ENCODE measurements at regions of chr5 and their contacts with region 1.

Region 1: DNA sequence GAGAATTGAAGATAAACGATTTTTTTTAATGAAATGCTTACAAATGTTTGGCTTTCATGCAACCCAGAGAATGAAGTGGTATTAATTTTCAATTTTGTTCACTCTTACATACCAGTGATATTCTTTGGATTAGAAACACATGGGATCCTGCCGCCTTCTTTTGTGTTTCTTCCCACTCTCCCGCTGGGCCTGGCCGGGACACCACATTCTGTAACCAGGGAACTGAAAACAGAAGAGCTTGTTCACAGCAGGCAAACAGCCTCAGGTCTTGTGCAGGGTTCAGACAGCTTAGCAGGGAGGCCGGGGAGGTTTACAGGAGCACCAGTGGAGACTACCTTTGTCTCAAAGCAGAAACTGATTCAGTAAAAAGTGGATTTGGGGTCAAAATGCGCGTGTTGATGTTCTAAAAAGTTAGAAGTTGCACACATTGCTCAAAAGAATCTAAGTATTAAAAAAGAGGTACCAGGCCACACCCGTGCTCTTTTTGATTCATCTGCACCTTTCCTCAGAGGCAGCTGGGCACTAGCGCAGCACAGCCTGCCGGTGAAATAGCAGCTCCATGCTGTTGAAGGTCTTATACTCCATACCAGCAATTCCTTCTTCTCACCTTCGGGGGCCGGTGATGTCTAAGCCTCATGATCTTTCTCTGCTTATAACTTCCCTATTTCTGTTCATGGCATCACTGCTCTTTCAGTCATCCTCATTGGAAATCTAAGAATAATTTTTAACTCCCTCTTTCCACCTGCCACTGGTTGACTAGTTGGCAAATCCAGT is 67.1 kb downstream of the GRAMD2B start:
- DNase-seq: no peak
- ATAC-seq: no peak
- H3K4me3 ChIP-seq: no peak overlapping the region
- H3K4me3 Mint-ChIP-seq: no peak overlapping the region
- H3K27ac ChIP-seq: no peak overlapping the region
- H3K27ac Mint-ChIP-seq: peak overlapping the region in 7 of 9 donors; percentile 2 to 91 (median 38)
- H3K4me1 ChIP-seq: no peaks in the 10 kb centered on the region
- H3K4me1 Mint-ChIP-seq: peaks cover 0 to 10% (median 0%) of the 10 kb centered on the region in 7 donors
- H3K27me3 ChIP-seq: no peaks in the 10 kb centered on the region
- H3K27me3 Mint-ChIP-seq: no peaks in the 10 kb centered on the region

Region 2: DNA sequence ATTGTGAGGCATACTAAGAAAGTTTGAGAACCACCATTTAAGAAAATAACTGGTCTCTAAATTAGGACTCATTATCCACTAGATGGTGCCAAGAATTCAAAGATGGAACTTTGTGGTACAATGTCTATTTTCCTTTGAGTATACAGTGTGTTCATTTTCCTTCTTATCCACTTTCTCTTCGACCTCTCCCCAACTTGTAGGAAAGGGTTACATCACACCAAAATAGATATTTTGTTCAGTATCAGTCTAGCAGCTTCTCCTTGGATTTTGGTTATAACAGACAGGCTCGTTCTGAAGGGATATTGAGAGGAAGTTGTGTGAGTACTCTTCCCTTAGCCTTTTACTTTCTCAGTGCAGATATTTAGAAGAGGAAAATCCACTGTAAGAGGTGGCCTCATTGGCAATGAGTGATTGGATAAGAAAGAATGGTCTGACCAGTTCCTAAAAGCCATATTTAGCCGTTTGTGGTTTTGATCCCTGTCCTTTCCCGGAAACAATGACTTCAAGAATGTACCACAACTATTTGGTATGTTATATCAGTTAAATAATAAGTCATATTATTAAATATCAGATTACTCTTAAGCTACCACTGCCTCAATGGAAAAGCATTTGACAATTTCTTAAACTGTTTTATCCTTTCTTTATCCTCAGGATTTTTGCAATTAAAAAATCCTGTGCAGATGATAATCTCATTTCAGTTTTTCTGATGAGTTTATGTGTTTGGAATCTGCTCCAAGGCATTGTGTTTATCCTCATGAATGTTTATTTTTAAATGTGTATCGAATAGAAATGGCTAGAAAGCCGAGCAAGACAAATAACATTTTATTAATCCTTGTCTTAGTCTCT is 136.1 kb before region 1 on chr5:
- CTCF ChIA-PET with region 1: interaction called, 8 read pairs
- POLR2A ChIA-PET with region 1: interaction called, 4 read pairs
- intact Hi-C with region 1: loop called in 1 of 2 experiments (anchors 1 kb)
- DNase-seq: peak in 7 of 9 donors; percentile 26 to 66 (median 53)
- ATAC-seq: peak; percentile 78
- H3K4me3 ChIP-seq: no peak overlapping the region
- H3K4me3 Mint-ChIP-seq: peak overlapping the region; percentile 12 to 80 (median 72)
- H3K27ac ChIP-seq: no peak overlapping the region
- H3K27ac Mint-ChIP-seq: peak overlapping the region in 7 of 9 donors; percentile 19 to 65 (median 36)
- H3K4me1 ChIP-seq: peaks cover 0 to 12% of the 10 kb centered on the region in 2 donors
- H3K4me1 Mint-ChIP-seq: peaks cover 3 to 21% (median 15%) of the 10 kb centered on the region in 7 donors
- H3K27me3 ChIP-seq: no peaks in the 10 kb centered on the region
- H3K27me3 Mint-ChIP-seq: peaks cover 0 to 16% (median 0%) of the 10 kb centered on the region in 5 donors

Region 3: GRCh38 chr5:126385524-126385923 is 104.8 kb before region 1 on chr5:
- CTCF ChIA-PET with region 1: no interaction called
- POLR2A ChIA-PET with region 1: no interaction called
- intact Hi-C with region 1: no loop called
- DNase-seq: no peak
- ATAC-seq: no peak
- H3K4me3 ChIP-seq: no peak overlapping the region
- H3K4me3 Mint-ChIP-seq: no peak overlapping the region
- H3K27ac ChIP-seq: no peak overlapping the region
- H3K27ac Mint-ChIP-seq: no peak overlapping the region
- H3K4me1 ChIP-seq: no peaks in the 10 kb centered on the region
- H3K4me1 Mint-ChIP-seq: no peaks in the 10 kb centered on the region
- H3K27me3 ChIP-seq: no peaks in the 10 kb centered on the region
- H3K27me3 Mint-ChIP-seq: peaks cover 0 to 8% (median 0%) of the 10 kb centered on the region in 5 donors

Region 4: DNA sequence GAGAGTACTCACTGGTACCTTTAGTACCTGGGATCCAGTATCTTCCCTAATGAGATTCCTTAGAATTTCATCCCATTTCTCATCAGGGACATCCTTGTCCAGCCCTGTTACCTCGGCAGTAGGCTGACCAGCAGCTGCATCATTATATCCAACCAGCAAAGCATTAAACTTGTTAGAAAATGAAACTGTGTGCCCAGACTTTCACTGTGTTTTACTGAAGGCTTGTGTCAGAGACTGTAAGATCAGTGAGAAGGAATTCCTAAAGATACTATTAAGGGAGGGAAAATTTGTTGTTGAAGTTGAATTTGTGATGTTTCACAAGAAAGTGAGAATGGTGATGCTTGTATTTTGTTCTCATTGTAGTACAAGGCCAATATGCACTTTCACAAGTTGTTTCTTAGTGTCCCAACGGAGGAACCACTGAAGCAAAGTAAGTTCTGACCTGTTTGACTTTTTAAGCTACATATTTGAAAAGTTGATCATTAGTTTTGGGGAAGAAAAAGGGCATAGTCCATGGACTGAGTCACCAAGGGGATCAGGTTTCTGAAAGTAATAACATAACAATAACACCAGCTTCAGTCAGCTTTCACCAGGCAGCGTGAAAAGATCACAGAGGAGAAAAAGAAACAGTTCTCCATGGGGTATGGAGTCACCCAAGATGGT is 18.3 kb before region 1 on chr5:
- CTCF ChIA-PET with region 1: no interaction called
- POLR2A ChIA-PET with region 1: no interaction called
- intact Hi-C with region 1: loop called in 1 of 2 experiments (anchors 2 kb)
- DNase-seq: no peak
- ATAC-seq: no peak
- H3K4me3 ChIP-seq: no peak overlapping the region
- H3K4me3 Mint-ChIP-seq: no peak overlapping the region
- H3K27ac ChIP-seq: no peak overlapping the region
- H3K27ac Mint-ChIP-seq: no peak overlapping the region
- H3K4me1 ChIP-seq: no peaks in the 10 kb centered on the region
- H3K4me1 Mint-ChIP-seq: no peaks in the 10 kb centered on the region
- H3K27me3 ChIP-seq: no peaks in the 10 kb centered on the region
- H3K27me3 Mint-ChIP-seq: no peaks in the 10 kb centered on the region

Measured in naive thymus-derived CD4-positive, alpha-beta T cell (primary cell).